G401 (cell line): ENCODE measurements at regions of chr11 and their contacts with region 1.

Region 1: DNA sequence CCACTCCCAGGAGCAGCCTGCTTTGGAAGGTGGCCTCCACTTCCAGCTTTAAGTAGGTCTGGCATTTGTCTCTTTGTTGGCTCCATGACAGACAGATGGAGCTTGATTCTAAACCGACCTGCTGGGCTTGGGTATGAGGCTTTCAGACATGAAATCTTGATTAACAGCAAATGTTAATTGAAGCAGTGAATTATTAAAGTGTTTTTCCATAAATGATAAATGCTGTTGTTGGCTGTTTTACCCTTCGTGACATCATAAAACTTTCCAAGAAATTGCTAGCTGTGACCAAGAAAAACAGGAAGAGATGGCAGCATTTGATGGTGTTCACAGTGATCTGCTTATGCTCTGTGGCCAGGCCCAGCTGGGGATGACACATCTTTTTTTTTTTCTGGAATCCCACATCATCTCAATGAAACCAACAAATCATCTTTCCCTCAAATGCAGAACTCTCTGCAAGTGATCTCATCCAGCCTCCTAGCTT is 66.1 kb downstream of the RBMXL2 start:
- DNase-seq: peak; percentile 75

Region 2: GRCh38 chr11:7098235-7098832 is 56.6 kb before region 1 on chr11:
- in situ Hi-C with region 1: no loop called
- DNase-seq: peak; percentile 71

Region 3: DNA sequence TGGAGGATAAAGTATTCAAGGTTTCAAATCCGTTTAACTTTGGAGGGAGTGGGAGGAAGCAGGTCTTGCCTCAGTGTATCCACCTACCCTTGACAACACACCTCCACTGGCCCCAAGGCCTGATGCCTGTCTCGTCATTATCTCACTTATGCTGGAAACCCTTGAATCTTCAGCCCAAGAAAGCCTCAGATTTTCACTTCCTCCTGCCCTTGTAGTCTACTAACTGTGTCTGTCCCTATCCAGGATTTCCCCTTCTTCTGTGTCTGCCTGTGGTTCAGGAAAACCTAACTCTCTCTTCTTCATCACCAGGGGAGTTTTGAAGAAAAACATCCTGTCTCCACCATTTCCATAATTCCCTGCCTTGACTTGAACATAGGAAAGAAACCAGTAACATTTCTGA is 152.9 kb after region 1 on chr11:
- in situ Hi-C with region 1: loop called (anchors 25 kb)
- DNase-seq: no peak